MCF 10A (cell line): ENCODE measurements at regions of chr1 and their contacts with region 1.

Region 1: GRCh38 chr1:218390618-218391017 is 45.5 kb downstream of the TGFB2 start:
- DNase-seq: peak; percentile 71
- H3K4me3 Mint-ChIP-seq: no peak overlapping the region
- H3K27ac Mint-ChIP-seq: peak overlapping the region; percentile 4
- H3K4me1 Mint-ChIP-seq: peaks cover 15% of the 10 kb centered on the region
- H3K27me3 Mint-ChIP-seq: no peaks in the 10 kb centered on the region
- CTCF ChIP-seq: no peak

Region 2: GRCh38 chr1:217089361-217090014 is 1301.1 kb before region 1 on chr1:
- CTCF ChIA-PET with region 1: no interaction called
- POLR2A ChIA-PET with region 1: no interaction called
- intact Hi-C with region 1: no loop called
- DNase-seq: peak; percentile 73
- H3K4me3 Mint-ChIP-seq: peak overlapping the region; percentile 69
- H3K27ac Mint-ChIP-seq: no peak overlapping the region
- H3K4me1 Mint-ChIP-seq: peaks cover 11% of the 10 kb centered on the region
- H3K27me3 Mint-ChIP-seq: peaks cover 23% of the 10 kb centered on the region
- CTCF ChIP-seq: no peak

Region 3: DNA sequence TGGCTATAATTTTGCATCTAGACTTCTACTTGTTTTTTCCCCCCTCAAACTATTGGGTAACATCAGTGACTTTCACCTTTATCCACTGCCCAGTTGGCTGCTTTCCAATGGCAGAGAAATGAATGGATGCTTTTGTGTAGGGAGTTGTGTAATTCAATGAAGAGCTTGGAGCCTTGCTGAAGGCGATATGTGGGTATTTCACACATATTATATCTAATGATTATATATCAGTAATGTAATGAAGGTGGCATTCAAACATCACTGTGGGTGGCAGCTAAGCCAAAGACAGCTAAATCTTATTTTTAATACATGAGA is 35.7 kb after region 1 on chr1:
- CTCF ChIA-PET with region 1: interaction called, 8 read pairs
- POLR2A ChIA-PET with region 1: no interaction called
- intact Hi-C with region 1: loop called (anchors 2 kb)
- DNase-seq: peak; percentile 99
- H3K4me3 Mint-ChIP-seq: no peak overlapping the region
- H3K27ac Mint-ChIP-seq: peak overlapping the region; percentile 53
- H3K4me1 Mint-ChIP-seq: peaks cover 18% of the 10 kb centered on the region
- H3K27me3 Mint-ChIP-seq: no peaks in the 10 kb centered on the region
- CTCF ChIP-seq: no peak